AG04449 (cell line): ENCODE measurements at regions of chr1 and their contacts with region 1.

Region 1: DNA sequence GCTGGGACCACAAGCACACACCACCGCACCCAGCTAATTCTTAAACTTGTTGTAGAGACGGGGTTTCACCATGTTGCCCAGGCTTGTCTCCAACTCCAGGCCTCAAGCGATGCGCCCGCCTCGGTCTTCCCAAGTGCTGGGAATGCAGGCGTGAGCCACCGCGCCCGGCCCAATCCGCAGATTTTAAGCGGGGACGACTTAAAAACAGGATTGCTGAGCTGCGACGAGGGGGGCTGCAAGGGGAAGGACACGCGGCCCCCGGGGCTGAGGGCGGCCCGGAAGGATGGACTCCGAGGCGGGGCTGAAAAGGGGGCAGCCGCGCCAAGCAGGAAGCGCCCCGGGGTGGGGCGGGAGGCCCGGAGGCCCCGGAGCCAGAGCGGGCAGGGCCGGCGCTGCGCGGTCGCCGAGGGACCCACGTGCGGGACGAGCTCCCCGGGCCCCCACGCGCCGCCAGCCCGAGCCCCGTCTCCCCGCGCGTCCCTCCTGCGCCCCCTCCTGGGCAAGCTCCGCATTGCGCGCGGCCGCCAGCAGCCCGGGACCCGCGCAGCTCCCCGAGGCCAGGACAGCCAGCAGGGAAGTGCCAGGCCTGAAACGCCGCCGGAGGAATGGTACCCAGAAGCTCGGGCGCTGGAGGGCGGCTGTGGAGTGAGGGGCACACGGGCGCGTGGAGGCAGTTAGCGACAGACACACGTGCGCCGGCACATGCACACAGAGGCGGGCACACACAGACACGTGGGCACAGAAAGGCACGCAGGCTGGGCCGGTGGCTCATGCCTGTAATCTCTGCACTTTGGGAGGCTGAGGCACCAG is 5.5 kb upstream of the PRKCZ start:
- DNase-seq: no peak
- H3K4me3 ChIP-seq: peak overlapping the region; percentile 36
- CTCF ChIP-seq: peak; percentile 93

Region 2: GRCh38 chr1:1906185-1907097 is 138.3 kb before region 1 on chr1:
- CTCF ChIA-PET with region 1: interaction called, 22 read pairs
- POLR2A ChIA-PET with region 1: no interaction called
- DNase-seq: no peak
- H3K4me3 ChIP-seq: no peak overlapping the region
- CTCF ChIP-seq: peak; percentile 97

Region 3: GRCh38 chr1:1943834-1944570 is 100.7 kb before region 1 on chr1:
- CTCF ChIA-PET with region 1: interaction called, 36 read pairs
- POLR2A ChIA-PET with region 1: no interaction called
- DNase-seq: no peak
- H3K4me3 ChIP-seq: no peak overlapping the region
- CTCF ChIP-seq: peak; percentile 89

Region 4: DNA sequence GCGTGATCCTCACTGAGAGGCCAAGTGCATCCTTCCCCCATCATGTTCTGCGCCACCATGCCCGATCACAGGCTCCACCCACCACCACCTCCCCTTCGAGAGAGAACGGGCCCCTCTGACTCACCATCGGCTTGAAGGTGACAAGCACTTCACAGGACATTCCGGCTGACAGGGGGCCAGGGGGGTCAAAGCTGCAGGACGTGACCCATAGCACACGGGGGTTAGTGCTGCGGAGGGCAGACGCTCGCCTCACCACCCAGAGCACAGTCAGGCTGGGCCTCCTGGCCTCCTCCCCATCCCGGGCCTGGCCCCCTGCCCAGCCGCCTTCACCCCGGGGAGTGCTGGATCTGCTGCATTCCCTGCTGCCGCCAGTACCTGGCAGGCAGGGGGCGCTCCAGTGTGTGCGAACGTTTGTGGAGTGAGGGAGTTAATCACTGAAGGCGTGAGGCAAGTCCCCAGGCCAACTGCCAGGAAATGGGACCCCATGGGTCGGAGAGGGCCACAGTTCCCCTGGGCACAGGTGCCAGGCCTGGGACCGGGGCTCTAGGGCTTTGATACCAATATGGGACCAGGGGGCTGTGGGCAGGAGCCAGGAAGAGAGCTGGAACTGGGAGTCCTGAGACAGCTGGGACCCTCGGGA is 84.8 kb before region 1 on chr1:
- CTCF ChIA-PET with region 1: interaction called, 32 read pairs
- POLR2A ChIA-PET with region 1: no interaction called
- DNase-seq: no peak
- H3K4me3 ChIP-seq: no peak overlapping the region
- CTCF ChIP-seq: peak; percentile 84

Region 5: DNA sequence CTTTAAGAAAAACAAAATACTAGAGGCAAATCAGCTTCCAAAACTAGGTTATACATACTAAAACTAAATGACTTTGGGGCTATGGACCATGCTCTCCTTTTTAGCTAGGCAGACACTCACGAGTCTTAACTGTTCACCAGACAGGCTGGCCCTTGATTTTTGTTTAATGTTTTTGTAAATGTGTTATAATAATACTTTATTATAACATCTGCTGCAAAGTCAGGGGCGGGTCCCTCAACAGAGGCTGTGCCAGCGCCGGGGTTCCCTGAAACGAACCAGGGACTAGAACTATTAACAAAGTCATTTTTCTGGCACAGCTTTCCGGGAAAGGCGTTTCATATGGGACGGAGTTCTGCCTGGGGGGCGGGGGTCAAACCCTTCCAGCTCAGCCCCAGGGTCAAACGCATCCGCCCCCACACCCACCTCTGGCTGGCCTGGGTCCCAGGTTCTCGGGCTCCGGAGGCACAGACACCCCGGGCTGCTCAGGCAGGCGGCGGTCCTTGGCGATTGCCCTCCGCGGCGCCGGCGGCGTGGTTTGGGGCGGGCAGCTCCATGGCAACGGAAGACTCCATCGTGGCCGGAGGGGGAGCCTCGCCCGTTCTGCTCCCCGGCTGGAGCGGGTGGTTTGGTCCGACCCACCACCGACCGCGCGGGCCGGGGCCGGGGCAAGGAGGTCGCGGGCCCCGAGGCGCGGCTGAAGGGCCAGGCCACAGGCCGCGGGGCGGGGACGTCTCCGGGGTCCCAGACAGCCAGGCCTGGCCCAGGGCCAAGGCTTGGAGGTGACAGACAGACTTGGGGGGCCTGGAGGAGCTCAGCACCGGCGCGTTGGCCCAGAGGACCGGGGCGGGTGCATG is 41.2 kb before region 1 on chr1 and contains the start of gene CFAP74:
- CTCF ChIA-PET with region 1: interaction called, 10 read pairs
- POLR2A ChIA-PET with region 1: no interaction called
- DNase-seq: no peak
- H3K4me3 ChIP-seq: no peak within 1 kb of the TSS
- CTCF ChIP-seq: no peak

Region 6: GRCh38 chr1:2025534-2025981 is 19.2 kb before region 1 on chr1:
- CTCF ChIA-PET with region 1: interaction called, 15 read pairs
- POLR2A ChIA-PET with region 1: no interaction called
- DNase-seq: no peak
- H3K4me3 ChIP-seq: no peak overlapping the region
- CTCF ChIP-seq: no peak

Region 7: GRCh38 chr1:2055911-2056575 is 11.3 kb after region 1 on chr1:
- CTCF ChIA-PET with region 1: interaction called, 46 read pairs
- POLR2A ChIA-PET with region 1: no interaction called
- DNase-seq: no peak
- H3K4me3 ChIP-seq: no peak overlapping the region
- CTCF ChIP-seq: no peak

Region 8: DNA sequence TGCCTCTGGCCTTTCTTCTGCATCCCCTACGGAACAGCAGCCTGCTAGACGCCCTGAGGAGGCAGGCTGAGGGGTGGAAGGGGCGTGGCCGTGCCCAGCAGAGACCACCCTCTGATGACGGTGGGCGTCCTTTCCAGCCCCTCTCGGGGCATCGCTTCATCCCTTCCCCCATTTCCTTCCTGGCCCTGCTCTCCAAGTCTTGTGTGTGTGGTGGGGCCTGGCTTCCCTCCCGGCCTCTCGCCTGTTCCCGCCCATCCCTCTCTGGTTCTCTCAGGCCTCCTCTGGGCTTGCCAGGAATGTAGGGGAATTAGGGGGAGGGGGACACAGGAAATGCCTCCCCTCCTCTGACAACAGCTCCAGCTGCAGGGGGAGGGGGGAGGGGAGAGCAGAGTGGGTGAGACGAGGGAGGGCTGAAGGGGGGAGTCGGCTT is 234.5 kb after region 1 on chr1:
- CTCF ChIA-PET with region 1: no interaction called
- POLR2A ChIA-PET with region 1: no interaction called
- DNase-seq: peak; percentile 69
- H3K4me3 ChIP-seq: 0 out of 2 replicates have a peak overlapping the region, but pooled peaks have one; percentile 25
- CTCF ChIP-seq: no peak

Region 9: DNA sequence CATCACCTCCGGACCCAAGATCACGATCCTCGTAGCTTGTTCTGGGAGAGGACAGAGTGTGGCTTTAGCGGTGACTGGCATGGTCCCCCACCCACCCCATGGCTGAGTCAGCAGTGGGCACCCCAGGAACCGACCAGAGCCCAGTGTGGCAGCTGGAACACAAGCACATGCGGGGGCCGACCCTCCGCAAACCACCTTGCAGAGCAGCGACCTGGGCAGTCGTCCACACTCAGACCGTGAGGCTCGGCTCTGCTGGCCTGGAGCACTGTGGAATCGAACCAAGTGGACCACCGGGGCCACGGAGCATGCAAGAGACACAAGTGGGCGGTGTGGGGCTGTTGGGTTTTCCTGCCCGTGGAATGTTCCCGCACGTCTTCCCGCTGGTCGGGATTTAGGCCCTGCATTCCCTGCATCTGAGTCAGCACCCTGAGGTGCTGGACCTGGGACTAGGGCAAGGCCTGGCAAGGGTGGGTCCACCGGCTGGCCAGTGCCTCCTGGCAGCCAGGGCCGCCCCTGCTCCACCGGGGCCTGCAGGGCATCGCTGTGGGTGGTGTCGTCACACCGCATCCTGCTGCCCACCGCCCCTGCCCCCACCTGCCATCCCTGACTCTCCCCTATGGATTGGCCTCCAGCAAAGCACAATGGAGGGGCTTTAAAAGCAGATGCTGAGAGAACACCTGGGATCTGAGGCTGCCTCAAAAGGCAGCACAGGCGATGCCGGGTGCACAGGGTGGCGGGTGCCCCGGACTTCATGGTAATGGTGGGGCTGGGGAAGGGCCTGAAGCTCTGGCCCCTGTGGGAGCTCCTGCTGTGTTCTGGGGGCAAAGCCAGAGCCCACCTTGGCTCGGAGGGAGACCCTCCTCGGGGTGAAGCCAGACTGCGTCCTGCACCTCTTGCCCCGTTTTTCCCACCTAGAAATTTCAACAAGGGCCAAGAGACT is 328.1 kb after region 1 on chr1:
- CTCF ChIA-PET with region 1: no interaction called
- POLR2A ChIA-PET with region 1: no interaction called
- DNase-seq: no peak
- H3K4me3 ChIP-seq: no peak overlapping the region
- CTCF ChIP-seq: no peak